Thyroid gland (tissue), 4 donors: ENCODE measurements at regions of chr2 and their contacts with region 1.

Region 1: GRCh38 chr2:36367895-36368353 is 12.3 kb downstream of the CRIM1 start:
- DNase-seq: peak in 1 of 2 donors; percentile 21
- H3K4me3 ChIP-seq: no peak overlapping the region
- H3K27ac ChIP-seq: peak overlapping the region; percentile 12 to 69 (median 62)
- H3K4me1 ChIP-seq: peaks cover 55 to 78% of the 10 kb centered on the region in 2 donors
- H3K27me3 ChIP-seq: no peaks in the 10 kb centered on the region
- CTCF ChIP-seq: peak in 1 of 6 experiments; percentile 10
- POLR2A ChIP-seq: peak in 1 of 2 donors; percentile 25

Region 2: DNA sequence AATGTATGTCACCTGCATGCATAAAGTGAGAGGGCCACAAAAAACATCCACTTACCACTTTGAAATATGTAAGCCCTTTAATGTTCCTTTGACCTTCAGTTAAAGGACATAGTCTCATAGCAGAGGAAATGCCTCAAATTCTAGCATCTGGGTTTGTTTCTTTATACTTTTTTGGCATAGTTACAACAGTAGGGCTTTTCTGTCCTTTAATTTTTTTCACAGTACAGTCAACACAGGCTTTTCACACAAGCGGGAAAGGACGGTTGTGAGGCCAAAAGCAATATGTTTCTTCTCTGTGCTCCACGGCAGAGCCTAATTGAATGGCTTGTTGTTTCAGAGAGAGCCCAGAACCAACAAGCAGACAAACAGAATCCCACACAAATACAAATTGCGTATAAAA is 45.3 kb after region 1 on chr2:
- intact Hi-C with region 1: loop called (anchors 10 kb)
- DNase-seq: no peak
- H3K4me3 ChIP-seq: no peak overlapping the region
- H3K27ac ChIP-seq: peak overlapping the region in 2 of 3 donors; percentile 78 to 88
- H3K4me1 ChIP-seq: peaks cover 54 to 81% of the 10 kb centered on the region in 2 donors
- H3K27me3 ChIP-seq: no peaks in the 10 kb centered on the region
- CTCF ChIP-seq: no peak
- POLR2A ChIP-seq: no peak

Region 3: DNA sequence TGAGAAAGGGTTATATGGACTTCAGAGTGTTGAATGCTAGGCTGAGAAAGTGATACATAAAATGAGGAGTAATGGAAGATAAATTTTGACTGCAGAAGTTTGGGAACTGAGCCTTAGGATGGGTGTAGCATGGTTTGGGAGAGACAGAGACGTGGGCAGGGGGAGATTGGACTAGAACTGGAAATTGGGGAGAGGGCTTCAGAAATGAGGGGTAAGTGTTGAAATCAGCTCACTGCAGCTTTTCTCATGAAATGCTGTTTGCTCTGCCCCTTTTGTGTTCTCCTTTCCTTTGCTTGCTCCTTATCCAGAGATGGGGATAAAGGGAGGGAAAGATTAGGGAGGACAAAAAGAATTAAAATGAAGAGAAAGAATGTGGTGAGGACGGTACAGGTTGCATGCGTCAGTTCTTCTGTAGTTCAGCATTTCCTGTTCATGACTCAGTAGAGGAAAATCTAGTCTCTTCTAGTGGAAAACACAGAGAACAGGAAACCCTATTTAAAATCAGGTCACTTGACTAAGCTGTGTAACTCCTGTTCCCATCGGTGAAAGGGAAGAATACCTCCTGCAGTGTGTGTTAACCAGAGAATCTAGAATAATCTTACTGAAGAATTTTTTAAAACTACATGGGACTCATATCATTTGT is 93.2 kb after region 1 on chr2:
- intact Hi-C with region 1: loop called (anchors 5 kb)
- DNase-seq: no peak
- H3K4me3 ChIP-seq: no peak overlapping the region
- H3K27ac ChIP-seq: peak overlapping the region in 2 of 3 donors; percentile 54 to 73
- H3K4me1 ChIP-seq: peaks cover 46 to 62% of the 10 kb centered on the region in 2 donors
- H3K27me3 ChIP-seq: no peaks in the 10 kb centered on the region
- CTCF ChIP-seq: no peak
- POLR2A ChIP-seq: no peak